Dendritic cell treated with granulocyte-macrophage colony-stimulating factor and Interleukin-4, amounts not matched to agents 40 ng/mL and 50 ng/mL, for 4 days (primary cell): ENCODE measurements at regions of chr11 and their contacts with region 1.

Region 1: GRCh38 chr11:65961232-65961901 is at the start of gene SART1:
- H3K4me3 Mint-ChIP-seq: peak within 1 kb of the TSS; percentile 94
- H3K27ac Mint-ChIP-seq: peak within 1 kb of the TSS; percentile 99
- H3K4me1 Mint-ChIP-seq: peaks cover 44% of the 10 kb centered on the region
- H3K27me3 Mint-ChIP-seq: no peaks in the 10 kb centered on the region

Region 2: DNA sequence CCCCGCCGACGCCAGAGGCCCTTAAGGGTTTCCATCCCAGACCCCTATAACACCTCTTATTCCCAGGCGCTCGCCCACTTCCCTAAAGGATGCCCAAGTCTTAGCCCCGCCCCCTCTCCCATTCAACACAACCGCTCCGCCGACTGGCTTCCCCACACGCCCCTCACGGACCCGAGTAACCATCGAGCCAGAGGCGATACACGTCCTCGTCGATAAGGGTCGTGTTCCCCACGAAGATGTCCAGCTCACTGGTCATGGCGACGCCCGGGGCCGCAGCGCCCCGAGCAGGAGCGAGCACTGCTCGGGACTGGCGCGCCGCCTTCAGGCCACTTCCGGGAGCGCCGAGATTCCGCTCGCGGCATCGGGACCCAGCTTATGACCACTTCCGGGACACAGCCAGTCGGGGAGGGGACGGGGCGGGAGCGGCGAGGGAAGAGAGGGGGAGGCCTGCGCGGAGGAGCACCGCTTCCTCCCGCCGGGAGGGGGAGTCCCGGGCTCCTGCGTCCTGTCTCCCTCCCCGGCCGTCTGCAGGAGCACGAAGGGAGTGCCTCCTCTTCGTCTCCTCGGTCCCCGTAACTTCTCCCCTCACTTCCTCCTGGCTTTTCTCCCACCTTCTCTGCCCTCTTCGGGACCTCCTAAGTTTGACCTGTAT is 73.1 kb before region 1 on chr11 and contains the start of gene FIBP:
- intact Hi-C with region 1: loop called (anchors 2 kb)
- H3K4me3 Mint-ChIP-seq: peak within 1 kb of the TSS; percentile 98
- H3K27ac Mint-ChIP-seq: peak within 1 kb of the TSS; percentile 99
- H3K4me1 Mint-ChIP-seq: peaks cover 77% of the 10 kb centered on the region
- H3K27me3 Mint-ChIP-seq: no peaks in the 10 kb centered on the region

Region 3: GRCh38 chr11:66001942-66002647 is 40.7 kb after region 1 on chr11 and contains the starts of genes BANF1 and EIF1AD:
- intact Hi-C with region 1: loop called (anchors 1 kb)
- H3K4me3 Mint-ChIP-seq: peak within 1 kb of the TSS; percentile 98
- H3K27ac Mint-ChIP-seq: peak within 1 kb of the TSS; percentile 100
- H3K4me1 Mint-ChIP-seq: peaks cover 35% of the 10 kb centered on the region
- H3K27me3 Mint-ChIP-seq: no peaks in the 10 kb centered on the region